Mucosa of descending colon (tissue), 3 donors: ENCODE measurements at regions of chr9 and their contacts with region 1.

Region 1: DNA sequence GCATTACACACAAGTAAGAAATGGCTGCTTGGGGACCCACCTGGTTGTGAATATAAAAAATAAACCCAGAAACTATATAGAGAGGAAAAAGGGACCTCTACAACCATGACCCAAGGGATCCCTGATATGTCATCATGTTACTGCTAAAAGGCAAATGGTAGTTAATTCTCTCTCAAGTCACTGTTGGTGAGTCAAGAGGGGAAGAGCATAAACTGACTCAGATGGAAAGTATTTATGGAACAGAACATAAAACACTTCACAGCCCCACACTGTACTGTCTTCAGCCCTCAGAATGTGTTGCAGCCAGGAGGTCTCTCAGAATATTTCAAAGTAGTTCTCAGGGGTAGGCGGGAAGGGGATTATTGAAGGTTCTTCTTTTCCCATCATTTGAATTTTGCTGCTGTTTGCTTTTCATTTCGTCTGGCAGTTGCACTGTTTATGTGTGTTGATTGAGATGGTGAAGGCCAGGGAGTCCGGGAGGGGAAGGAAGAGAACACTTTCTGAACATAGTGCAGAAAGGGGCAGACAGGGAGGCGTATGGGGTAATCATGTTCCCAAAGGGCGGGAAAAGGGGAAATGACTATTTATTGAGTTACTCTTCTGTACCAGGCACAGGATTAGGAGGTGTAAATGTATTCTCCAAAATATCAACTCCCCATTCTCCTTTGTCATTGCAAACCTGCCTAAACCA is 85.5 kb downstream of the TEK start:
- DNase-seq: no peak
- ATAC-seq: peak; percentile 85
- H3K4me3 ChIP-seq: no peak overlapping the region
- H3K4me1 ChIP-seq: no peaks in the 10 kb centered on the region
- CTCF ChIP-seq: no peak

Region 2: GRCh38 chr9:27131731-27132130 is 62.8 kb before region 1 on chr9:
- intact Hi-C with region 1: loop called in 1 of 2 experiments (anchors 10 kb)
- DNase-seq: no peak
- ATAC-seq: no peak
- H3K4me3 ChIP-seq: no peak overlapping the region
- H3K4me1 ChIP-seq: no peaks in the 10 kb centered on the region
- CTCF ChIP-seq: no peak

Region 3: DNA sequence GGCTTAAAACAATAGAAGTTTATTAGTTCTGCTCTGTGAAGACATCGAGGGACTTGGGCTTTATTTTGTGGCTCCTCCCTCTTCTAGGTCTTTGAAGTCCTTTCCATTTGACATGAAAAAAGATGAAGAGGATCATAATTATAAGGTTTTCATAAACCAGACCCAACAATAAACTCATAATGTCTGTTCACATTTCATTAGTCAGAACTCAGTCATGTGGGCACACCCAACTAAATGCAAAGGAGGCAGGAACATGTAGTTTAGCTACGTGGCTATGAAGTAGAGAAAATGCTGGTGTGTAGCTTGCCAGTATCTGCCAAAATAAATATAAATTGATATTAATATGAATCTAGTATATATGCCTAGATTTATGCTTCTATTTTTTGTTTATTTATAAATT is 772.7 kb after region 1 on chr9:
- intact Hi-C with region 1: no loop called
- DNase-seq: no peak
- ATAC-seq: no peak
- H3K4me3 ChIP-seq: no peak overlapping the region
- H3K4me1 ChIP-seq: no peaks in the 10 kb centered on the region
- CTCF ChIP-seq: no peak